ENCODE measurements at regions of chr13 and their contacts with region 1.

Region 1: GRCh38 chr13:44577236-44578066 is 1.3 kb upstream of the TSC22D1 start:
- DNase-seq: peak; percentile 97 to 99
- ATAC-seq: peak; percentile 81 to 90 (median 83)
- H3K4me3 ChIP-seq: peak overlapping the region; percentile 90
- H3K27ac ChIP-seq: peak overlapping the region; percentile 94
- H3K4me1 ChIP-seq: peaks cover 14% of the 10 kb centered on the region
- H3K27me3 ChIP-seq: no peaks in the 10 kb centered on the region
- CTCF ChIP-seq: no peak

Region 2: GRCh38 chr13:44498969-44499368 is 78.5 kb before region 1 on chr13:
- intact Hi-C with region 1: loop called in 1 of 2 experiments (anchors 10 kb)
- DNase-seq: no peak
- ATAC-seq: no peak
- H3K4me3 ChIP-seq: no peak overlapping the region
- H3K27ac ChIP-seq: no peak overlapping the region
- H3K4me1 ChIP-seq: peaks cover 6% of the 10 kb centered on the region
- H3K27me3 ChIP-seq: no peaks in the 10 kb centered on the region
- CTCF ChIP-seq: no peak

Region 3: DNA sequence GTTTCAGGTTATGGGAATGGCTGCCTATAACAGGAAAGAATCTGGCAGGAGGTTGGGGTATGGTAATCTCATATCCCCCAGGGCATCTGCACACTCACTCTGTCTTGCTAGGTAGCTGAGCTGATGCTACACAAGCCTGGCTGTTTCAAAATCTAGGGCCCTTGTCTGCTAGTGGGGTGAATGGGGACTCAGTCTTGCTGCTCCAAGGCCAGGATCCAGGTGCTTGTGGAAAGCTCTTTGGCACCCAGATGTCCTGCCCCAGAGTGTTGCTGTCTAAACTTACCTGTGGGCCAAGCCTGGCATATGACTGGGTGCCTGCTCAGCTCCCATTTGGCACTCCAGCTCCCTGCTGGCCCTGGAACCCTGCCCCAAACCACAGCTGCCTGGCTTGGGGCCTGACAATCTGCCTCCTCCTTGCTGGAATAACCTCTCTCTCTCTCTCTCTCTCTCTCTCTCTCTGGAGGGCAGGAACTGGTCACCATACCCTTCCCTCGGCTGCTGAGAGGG is 156.8 kb after region 1 on chr13:
- intact Hi-C with region 1: loop called in 1 of 2 experiments (anchors 5 kb)
- DNase-seq: peak; percentile 82 to 93
- ATAC-seq: peak; percentile 86 to 90 (median 88)
- H3K4me3 ChIP-seq: peak overlapping the region; percentile 19
- H3K27ac ChIP-seq: peak overlapping the region; percentile 83
- H3K4me1 ChIP-seq: peaks cover 18% of the 10 kb centered on the region
- H3K27me3 ChIP-seq: no peaks in the 10 kb centered on the region
- CTCF ChIP-seq: no peak

Region 4: DNA sequence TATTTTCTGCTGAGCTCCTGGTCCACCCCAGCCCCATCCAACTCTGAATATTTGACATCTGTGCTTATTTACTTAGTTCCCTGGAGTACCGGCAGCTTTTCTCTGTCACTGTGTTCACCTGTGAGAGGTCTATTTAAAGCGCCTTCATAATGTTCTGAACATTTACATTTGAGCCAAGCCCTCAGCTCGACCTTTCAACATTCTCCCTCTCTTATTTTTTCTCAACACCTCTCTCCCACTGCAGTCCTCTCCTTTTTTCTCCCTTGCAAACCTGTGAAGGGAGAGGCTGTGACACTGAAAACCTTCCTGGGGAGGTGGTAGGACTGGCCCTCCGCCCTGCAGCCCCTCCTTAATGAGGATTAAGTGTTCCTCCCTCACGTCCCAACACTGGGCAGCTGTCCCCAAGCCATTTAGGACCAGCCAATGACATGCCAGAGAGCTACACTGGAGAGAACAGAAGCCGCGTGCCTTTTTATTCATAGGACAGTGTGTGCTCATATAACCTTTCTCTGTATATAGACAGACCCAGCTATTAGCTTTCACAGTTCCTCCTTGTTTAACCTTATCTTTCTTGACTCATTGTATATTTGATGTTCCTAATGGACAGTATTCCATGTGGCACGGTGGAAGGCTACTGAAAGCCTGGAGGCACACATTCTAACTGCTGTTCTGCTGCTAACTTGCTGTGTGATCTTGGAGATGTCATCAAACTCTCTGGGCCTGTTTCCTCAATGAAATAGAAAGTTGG is 277.0 kb after region 1 on chr13:
- intact Hi-C with region 1: loop called (anchors 5 kb)
- DNase-seq: peak; percentile 80 to 94
- ATAC-seq: peak; percentile 94 to 96 (median 96)
- H3K4me3 ChIP-seq: peak overlapping the region; percentile 41
- H3K27ac ChIP-seq: peak overlapping the region; percentile 92
- H3K4me1 ChIP-seq: peaks cover 21% of the 10 kb centered on the region
- H3K27me3 ChIP-seq: no peaks in the 10 kb centered on the region
- CTCF ChIP-seq: no peak

Region 5: GRCh38 chr13:44917589-44918325 is 340.3 kb after region 1 on chr13:
- intact Hi-C with region 1: loop called in 1 of 2 experiments (anchors 5 kb)
- DNase-seq: peak; percentile 93 to 97
- ATAC-seq: peak; percentile 69 to 79 (median 72)
- H3K4me3 ChIP-seq: peak overlapping the region; percentile 70
- H3K27ac ChIP-seq: peak overlapping the region; percentile 93
- H3K4me1 ChIP-seq: peaks cover 26% of the 10 kb centered on the region
- H3K27me3 ChIP-seq: no peaks in the 10 kb centered on the region
- CTCF ChIP-seq: peak; percentile 41

Measured in psoas muscle (tissue), 8 donors.